ENCODE measurements at regions of chr6 and their contacts with region 1.

Region 1: DNA sequence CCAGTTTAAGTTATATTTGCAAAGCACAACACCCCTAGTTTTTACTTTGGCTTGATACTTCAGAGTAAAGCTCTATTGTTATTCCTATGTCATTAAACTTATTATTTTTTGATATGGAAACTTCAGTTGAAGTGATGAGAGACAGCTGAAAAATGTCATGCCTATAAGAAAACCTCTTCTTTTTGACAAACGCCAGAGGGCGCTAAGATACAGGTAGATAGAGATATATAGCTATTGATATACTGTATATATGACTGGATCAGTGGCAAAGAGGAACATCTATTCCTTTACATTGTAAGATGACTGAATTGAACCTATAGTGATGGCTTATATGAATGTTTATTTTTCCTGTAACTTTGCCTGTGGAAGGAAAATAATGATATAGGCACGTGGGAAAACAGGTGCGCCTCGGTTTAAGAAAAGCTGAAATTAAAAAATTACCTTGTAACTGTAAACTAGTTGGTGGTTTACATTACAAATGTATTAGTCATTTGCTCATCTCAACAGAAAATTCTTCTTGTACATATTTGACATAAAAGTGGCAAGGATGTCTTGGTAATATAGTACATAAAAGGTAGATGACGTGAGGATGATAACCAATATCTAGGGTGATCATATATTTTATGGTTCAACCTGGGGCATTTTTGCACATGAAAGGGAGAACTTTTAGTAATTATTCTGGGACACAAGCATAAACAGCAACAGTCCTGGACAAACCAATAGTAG is 74.1 kb downstream of the LAMA4 start:
- DNase-seq: peak; percentile 66
- H3K4me3 ChIP-seq: no peak overlapping the region
- CTCF ChIP-seq: peak; percentile 46

Region 2: GRCh38 chr6:112199001-112199403 is 18.7 kb after region 1 on chr6:
- CTCF ChIA-PET with region 1: interaction called, 33 read pairs
- POLR2A ChIA-PET with region 1: no interaction called
- DNase-seq: no peak
- H3K4me3 ChIP-seq: no peak overlapping the region
- CTCF ChIP-seq: no peak

Region 3: GRCh38 chr6:112253841-112254816 is 73.9 kb after region 1 on chr6 and contains the start of gene LAMA4:
- CTCF ChIA-PET with region 1: interaction called, 14 read pairs
- POLR2A ChIA-PET with region 1: no interaction called
- DNase-seq: no peak
- H3K4me3 ChIP-seq: peak within 1 kb of the TSS; percentile 80
- CTCF ChIP-seq: no peak

Region 4: DNA sequence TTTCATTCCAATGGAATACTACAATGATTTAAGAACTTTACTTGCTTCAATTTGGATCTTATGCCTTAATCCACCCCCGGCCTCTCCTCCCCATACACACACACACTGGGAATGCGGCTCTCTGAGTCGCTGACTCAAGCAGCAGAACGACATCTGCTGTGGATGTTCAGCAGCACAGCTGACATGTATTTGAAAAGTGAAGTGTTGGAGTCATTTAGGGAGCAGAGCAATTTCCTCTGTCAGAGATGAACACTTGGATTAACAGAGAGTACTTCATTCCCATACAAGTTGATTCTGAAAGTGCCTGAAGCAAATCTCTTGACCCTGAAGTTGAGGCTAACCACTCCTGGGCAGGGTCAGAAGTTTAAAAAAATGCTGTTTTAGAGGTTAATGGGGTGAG is 102.0 kb after region 1 on chr6:
- CTCF ChIA-PET with region 1: interaction called, 86 read pairs
- POLR2A ChIA-PET with region 1: no interaction called
- DNase-seq: peak; percentile 80
- H3K4me3 ChIP-seq: no peak overlapping the region
- CTCF ChIP-seq: peak; percentile 61

Region 5: GRCh38 chr6:112296122-112296521 is 115.9 kb after region 1 on chr6:
- CTCF ChIA-PET with region 1: interaction called, 51 read pairs
- POLR2A ChIA-PET with region 1: interaction called, 4 read pairs
- DNase-seq: no peak
- H3K4me3 ChIP-seq: no peak overlapping the region
- CTCF ChIP-seq: peak; percentile 65

Region 6: GRCh38 chr6:112321941-112322424 is 141.7 kb after region 1 on chr6:
- CTCF ChIA-PET with region 1: interaction called, 45 read pairs
- POLR2A ChIA-PET with region 1: no interaction called
- DNase-seq: no peak
- H3K4me3 ChIP-seq: no peak overlapping the region
- CTCF ChIP-seq: no peak